Naive thymus-derived CD4-positive, alpha-beta T cell (primary cell): ENCODE measurements at regions of chr6 and their contacts with region 1.

Region 1: DNA sequence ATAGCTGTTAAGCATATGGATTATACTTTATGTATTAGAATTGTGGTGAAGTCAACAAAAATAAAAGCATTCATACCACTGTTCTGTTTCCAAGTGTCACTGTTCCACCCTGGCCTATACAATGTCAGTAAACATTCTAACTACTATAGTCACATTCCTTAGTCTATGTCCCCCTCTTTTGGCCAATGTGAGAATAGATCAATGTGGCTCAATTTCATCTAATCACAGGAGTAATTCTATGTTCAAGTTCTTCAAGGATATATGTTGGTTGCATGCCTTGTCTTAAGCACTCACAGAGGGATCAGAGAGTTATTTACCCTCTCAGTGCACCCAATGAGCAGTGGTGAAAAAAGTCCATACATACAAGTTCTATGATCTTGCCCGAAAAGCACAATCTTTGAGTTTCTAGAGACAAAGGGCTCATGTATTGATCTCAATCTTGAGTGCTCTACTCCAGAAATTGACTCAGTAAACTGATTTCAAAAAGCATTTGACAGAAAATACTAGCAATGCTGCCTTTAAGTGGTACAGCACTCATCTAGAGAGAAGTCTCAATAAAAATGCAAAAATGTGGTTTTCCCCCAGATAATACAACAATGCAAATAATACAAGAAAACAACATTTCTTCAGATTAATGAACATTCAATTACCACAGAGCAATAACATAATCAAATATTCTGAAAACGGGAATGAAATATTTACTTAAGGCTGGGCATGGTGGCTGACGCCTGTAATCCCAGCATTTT is 16.5 kb downstream of the SMLR1 start:
- DNase-seq: peak in 7 of 9 donors; percentile 30 to 74 (median 52)
- ATAC-seq: peak; percentile 90
- H3K4me3 ChIP-seq: no peak overlapping the region
- H3K4me3 Mint-ChIP-seq: no peak overlapping the region
- H3K27ac ChIP-seq: no peak overlapping the region
- H3K27ac Mint-ChIP-seq: peak overlapping the region in 1 of 9 donors; percentile 51
- H3K4me1 ChIP-seq: no peaks in the 10 kb centered on the region
- H3K4me1 Mint-ChIP-seq: peaks cover 0 to 7% (median 0%) of the 10 kb centered on the region in 7 donors
- H3K27me3 ChIP-seq: no peaks in the 10 kb centered on the region
- H3K27me3 Mint-ChIP-seq: no peaks in the 10 kb centered on the region

Region 2: GRCh38 chr6:129598244-129599187 is 1245.2 kb before region 1 on chr6:
- CTCF ChIA-PET with region 1: no interaction called
- POLR2A ChIA-PET with region 1: no interaction called
- intact Hi-C with region 1: loop called in 1 of 2 experiments (anchors 1 kb)
- DNase-seq: peak in 7 of 9 donors; percentile 37 to 79 (median 70)
- ATAC-seq: peak; percentile 95
- H3K4me3 ChIP-seq: no peak overlapping the region
- H3K4me3 Mint-ChIP-seq: no peak overlapping the region
- H3K27ac ChIP-seq: no peak overlapping the region
- H3K27ac Mint-ChIP-seq: no peak overlapping the region
- H3K4me1 ChIP-seq: no peaks in the 10 kb centered on the region
- H3K4me1 Mint-ChIP-seq: peaks cover 0 to 2% (median 0%) of the 10 kb centered on the region in 7 donors
- H3K27me3 ChIP-seq: no peaks in the 10 kb centered on the region
- H3K27me3 Mint-ChIP-seq: peaks cover 0 to 3% (median 0%) of the 10 kb centered on the region in 5 donors

Region 3: DNA sequence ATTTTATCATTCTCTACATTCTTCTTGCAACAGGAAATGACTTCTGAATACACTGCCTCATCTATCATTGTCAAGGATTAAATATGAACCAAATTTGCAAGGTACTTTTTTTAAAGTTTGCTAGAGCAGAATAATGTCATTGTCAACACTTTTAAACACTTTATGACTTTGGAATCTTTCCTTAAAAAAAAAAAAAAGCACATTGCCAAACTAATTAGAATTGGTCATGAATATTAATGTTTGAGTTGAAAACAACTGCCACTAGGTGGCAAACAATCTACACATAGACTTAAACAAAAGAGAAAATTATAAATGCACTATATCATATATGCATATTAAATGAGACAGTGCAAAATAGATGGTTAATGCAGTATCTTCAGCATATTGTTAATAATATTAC is 950.1 kb before region 1 on chr6:
- CTCF ChIA-PET with region 1: no interaction called
- POLR2A ChIA-PET with region 1: no interaction called
- intact Hi-C with region 1: loop called (anchors 5 to 10 kb)
- DNase-seq: peak in 4 of 9 donors; percentile 2 to 13 (median 8)
- ATAC-seq: peak; percentile 54
- H3K4me3 ChIP-seq: no peak overlapping the region
- H3K4me3 Mint-ChIP-seq: no peak overlapping the region
- H3K27ac ChIP-seq: no peak overlapping the region
- H3K27ac Mint-ChIP-seq: no peak overlapping the region
- H3K4me1 ChIP-seq: no peaks in the 10 kb centered on the region
- H3K4me1 Mint-ChIP-seq: peaks cover 0 to 5% (median 0%) of the 10 kb centered on the region in 7 donors
- H3K27me3 ChIP-seq: no peaks in the 10 kb centered on the region
- H3K27me3 Mint-ChIP-seq: peaks cover 0 to 14% (median 5%) of the 10 kb centered on the region in 5 donors

Region 4: DNA sequence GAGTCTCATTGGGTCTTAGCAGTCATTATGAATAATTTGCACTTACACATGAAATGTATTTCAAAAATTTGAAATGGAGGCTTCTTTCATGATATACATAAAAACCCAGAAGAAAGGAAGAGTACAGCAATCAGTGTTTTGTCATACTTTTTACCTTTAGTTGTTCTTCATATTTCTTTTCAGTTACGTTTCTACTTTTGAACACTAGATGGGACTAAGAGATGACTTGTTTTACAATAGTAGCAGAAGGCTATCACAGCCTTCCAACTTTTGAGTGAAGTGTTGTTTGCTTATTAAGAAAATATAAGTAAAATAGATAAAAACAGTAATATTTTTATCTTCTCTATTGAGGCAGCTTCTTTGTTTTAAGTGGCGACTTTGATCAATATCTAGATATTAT is 767.2 kb before region 1 on chr6:
- CTCF ChIA-PET with region 1: interaction called, 3 read pairs
- POLR2A ChIA-PET with region 1: no interaction called
- intact Hi-C with region 1: loop called (anchors 1 kb)
- DNase-seq: peak in 5 of 9 donors; percentile 7 to 36 (median 27)
- ATAC-seq: no peak
- H3K4me3 ChIP-seq: no peak overlapping the region
- H3K4me3 Mint-ChIP-seq: peak overlapping the region in 1 of 10 donors; percentile 37
- H3K27ac ChIP-seq: no peak overlapping the region
- H3K27ac Mint-ChIP-seq: no peak overlapping the region
- H3K4me1 ChIP-seq: no peaks in the 10 kb centered on the region
- H3K4me1 Mint-ChIP-seq: peaks cover 12 to 31% (median 23%) of the 10 kb centered on the region in 7 donors
- H3K27me3 ChIP-seq: no peaks in the 10 kb centered on the region
- H3K27me3 Mint-ChIP-seq: no peaks in the 10 kb centered on the region

Region 5: GRCh38 chr6:130322673-130323268 is 521.0 kb before region 1 on chr6:
- CTCF ChIA-PET with region 1: interaction called, 13 read pairs
- POLR2A ChIA-PET with region 1: no interaction called
- intact Hi-C with region 1: loop called (anchors 1 kb)
- DNase-seq: peak in 8 of 9 donors; percentile 30 to 61 (median 56)
- ATAC-seq: peak; percentile 61
- H3K4me3 ChIP-seq: no peak overlapping the region
- H3K4me3 Mint-ChIP-seq: no peak overlapping the region
- H3K27ac ChIP-seq: no peak overlapping the region
- H3K27ac Mint-ChIP-seq: no peak overlapping the region
- H3K4me1 ChIP-seq: no peaks in the 10 kb centered on the region
- H3K4me1 Mint-ChIP-seq: peaks cover 0 to 16% (median 5%) of the 10 kb centered on the region in 7 donors
- H3K27me3 ChIP-seq: no peaks in the 10 kb centered on the region
- H3K27me3 Mint-ChIP-seq: peaks cover 0 to 33% (median 0%) of the 10 kb centered on the region in 5 donors

Region 6: DNA sequence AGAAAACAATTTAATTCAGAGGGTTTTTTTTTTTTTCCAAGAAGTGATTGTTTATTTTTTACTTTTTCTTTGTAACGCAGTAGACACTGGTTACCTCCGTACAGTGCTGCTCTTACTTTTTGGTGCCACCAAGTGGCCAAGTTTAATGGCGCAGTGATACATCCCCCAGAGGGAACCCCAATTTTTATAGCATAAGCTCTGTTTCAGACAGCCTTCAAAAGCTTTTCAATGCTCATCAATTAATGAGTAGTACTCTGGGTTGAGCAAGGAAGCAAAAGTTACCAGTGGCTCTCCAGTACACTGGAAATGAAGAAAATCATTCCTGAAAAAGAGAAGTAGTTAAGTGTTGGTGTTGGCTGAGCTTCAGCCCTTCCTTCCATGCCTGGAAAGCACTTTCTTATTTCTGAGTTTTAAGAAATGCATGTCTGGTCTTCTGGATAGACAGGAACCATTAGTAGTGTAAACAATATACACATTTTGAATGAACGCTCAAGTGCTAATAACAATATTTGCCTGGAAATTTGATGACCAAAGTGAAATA is 145.7 kb before region 1 on chr6:
- CTCF ChIA-PET with region 1: interaction called, 3 read pairs
- POLR2A ChIA-PET with region 1: interaction called, 3 read pairs
- intact Hi-C with region 1: loop called (anchors 2 kb)
- DNase-seq: peak in 7 of 9 donors; percentile 16 to 60 (median 58)
- ATAC-seq: peak; percentile 81
- H3K4me3 ChIP-seq: no peak overlapping the region
- H3K4me3 Mint-ChIP-seq: peak overlapping the region in 5 of 10 donors; percentile 24 to 57 (median 41)
- H3K27ac ChIP-seq: no peak overlapping the region
- H3K27ac Mint-ChIP-seq: peak overlapping the region in 1 of 9 donors; percentile 70
- H3K4me1 ChIP-seq: peaks cover 6 to 13% of the 10 kb centered on the region in 2 donors
- H3K4me1 Mint-ChIP-seq: peaks cover 11 to 63% (median 40%) of the 10 kb centered on the region in 7 donors
- H3K27me3 ChIP-seq: no peaks in the 10 kb centered on the region
- H3K27me3 Mint-ChIP-seq: peaks cover 0 to 5% (median 4%) of the 10 kb centered on the region in 5 donors

Region 7: DNA sequence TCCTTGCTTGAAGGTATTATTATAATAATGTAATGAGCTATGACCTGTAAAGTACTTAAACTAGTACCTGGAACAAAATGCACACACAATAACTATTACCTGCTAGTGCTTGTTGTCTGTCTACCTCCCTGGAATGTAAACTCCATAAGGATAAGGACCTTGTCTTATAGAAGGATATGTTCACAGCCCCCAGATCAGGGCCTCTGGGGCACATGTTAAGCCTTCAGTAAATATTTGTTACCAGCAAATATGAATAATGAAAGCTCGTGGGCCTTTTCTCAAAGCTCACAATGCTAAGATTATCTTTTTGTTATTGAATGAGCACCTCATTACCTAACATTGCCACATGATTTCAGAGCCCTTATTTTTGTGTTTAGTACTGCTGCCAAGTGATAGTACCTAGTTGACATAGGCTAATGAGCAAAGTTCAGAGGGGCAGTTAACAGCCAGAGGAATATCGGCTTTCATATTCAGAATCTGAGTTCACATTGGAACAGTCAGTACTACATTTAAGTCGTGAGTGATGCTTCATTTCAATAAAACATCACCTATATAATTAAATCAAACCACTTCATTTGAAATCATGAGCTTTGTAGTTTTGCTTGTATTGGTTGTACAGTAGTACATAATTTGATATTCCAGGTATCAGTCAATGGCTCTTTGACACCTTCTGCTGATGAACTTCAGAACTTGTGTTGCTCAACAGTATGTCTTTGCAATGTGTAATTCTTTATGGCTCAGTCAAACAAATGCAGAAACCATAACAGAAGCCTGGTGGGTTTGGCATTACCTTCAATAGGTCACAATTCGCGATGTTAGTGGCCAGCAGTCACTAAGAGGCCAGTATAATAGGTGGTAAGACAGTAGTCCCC is 28.3 kb before region 1 on chr6:
- CTCF ChIA-PET with region 1: no interaction called
- POLR2A ChIA-PET with region 1: no interaction called
- intact Hi-C with region 1: no loop called
- DNase-seq: no peak
- ATAC-seq: no peak
- H3K4me3 ChIP-seq: no peak overlapping the region
- H3K4me3 Mint-ChIP-seq: no peak overlapping the region
- H3K27ac ChIP-seq: no peak overlapping the region
- H3K27ac Mint-ChIP-seq: no peak overlapping the region
- H3K4me1 ChIP-seq: no peaks in the 10 kb centered on the region
- H3K4me1 Mint-ChIP-seq: peaks cover 0 to 3% (median 0%) of the 10 kb centered on the region in 7 donors
- H3K27me3 ChIP-seq: no peaks in the 10 kb centered on the region
- H3K27me3 Mint-ChIP-seq: peaks cover 0 to 7% (median 4%) of the 10 kb centered on the region in 5 donors

Region 8: DNA sequence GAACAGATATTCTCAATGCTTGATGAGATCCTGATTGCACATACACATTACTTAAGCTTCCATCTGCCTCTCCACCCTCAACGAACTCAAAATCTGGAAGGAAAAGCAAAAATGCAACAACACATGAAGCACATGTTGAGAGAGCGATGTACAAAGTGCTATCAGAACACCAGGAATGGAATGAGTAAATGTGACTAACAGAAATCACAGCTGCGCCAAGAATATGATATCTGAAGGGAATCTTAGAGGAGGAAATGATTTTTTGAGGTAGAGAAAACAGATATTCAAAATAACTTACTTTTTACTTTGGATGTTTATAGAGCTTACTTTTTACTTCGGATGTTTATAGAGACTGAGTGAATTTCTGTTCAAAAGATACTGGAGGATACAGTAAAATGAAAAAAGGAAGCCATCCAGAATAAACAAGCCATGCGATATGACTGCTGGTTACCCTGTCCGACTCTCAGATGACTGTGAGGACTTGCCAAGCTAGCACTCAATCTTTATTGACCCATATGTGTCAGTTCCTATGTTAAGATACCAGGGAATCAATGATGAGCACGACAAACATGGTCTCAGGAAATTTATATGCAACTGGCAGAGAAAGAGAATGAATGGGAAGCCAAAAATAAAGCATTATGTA is 85.4 kb after region 1 on chr6:
- CTCF ChIA-PET with region 1: no interaction called
- POLR2A ChIA-PET with region 1: no interaction called
- intact Hi-C with region 1: no loop called
- DNase-seq: no peak
- ATAC-seq: no peak
- H3K4me3 ChIP-seq: no peak overlapping the region
- H3K4me3 Mint-ChIP-seq: no peak overlapping the region
- H3K27ac ChIP-seq: no peak overlapping the region
- H3K27ac Mint-ChIP-seq: no peak overlapping the region
- H3K4me1 ChIP-seq: no peaks in the 10 kb centered on the region
- H3K4me1 Mint-ChIP-seq: peaks cover 0 to 2% (median 0%) of the 10 kb centered on the region in 7 donors
- H3K27me3 ChIP-seq: no peaks in the 10 kb centered on the region
- H3K27me3 Mint-ChIP-seq: peaks cover 0 to 2% (median 0%) of the 10 kb centered on the region in 5 donors